H1 (cell line): ENCODE measurements at regions of chr1 and their contacts with region 1.

Region 1: GRCh38 chr1:175319418-175320230 is 127.0 kb upstream of the KIAA0040 start:
- DNase-seq: peak; percentile 21 to 73
- H3K4me3 ChIP-seq: no peak overlapping the region
- H3K27ac ChIP-seq: no peak overlapping the region
- H3K4me1 ChIP-seq: no peaks in the 10 kb centered on the region
- H3K27me3 ChIP-seq: no peaks in the 10 kb centered on the region
- CTCF ChIP-seq: peak; percentile 89 to 96 (median 95)
- EP300 ChIP-seq: no peak
- POLR2A ChIP-seq: no peak
- RAD21 ChIP-seq: peak; percentile 90 to 91

Region 2: GRCh38 chr1:174858301-174858700 is 461.3 kb before region 1 on chr1:
- CTCF ChIA-PET with region 1: no interaction called
- POLR2A ChIA-PET with region 1: no interaction called
- DNase-seq: no peak
- H3K4me3 ChIP-seq: no peak overlapping the region
- H3K27ac ChIP-seq: no peak overlapping the region
- H3K4me1 ChIP-seq: no peaks in the 10 kb centered on the region
- H3K27me3 ChIP-seq: no peaks in the 10 kb centered on the region
- CTCF ChIP-seq: no peak
- EP300 ChIP-seq: no peak
- POLR2A ChIP-seq: no peak
- RAD21 ChIP-seq: no peak

Region 3: DNA sequence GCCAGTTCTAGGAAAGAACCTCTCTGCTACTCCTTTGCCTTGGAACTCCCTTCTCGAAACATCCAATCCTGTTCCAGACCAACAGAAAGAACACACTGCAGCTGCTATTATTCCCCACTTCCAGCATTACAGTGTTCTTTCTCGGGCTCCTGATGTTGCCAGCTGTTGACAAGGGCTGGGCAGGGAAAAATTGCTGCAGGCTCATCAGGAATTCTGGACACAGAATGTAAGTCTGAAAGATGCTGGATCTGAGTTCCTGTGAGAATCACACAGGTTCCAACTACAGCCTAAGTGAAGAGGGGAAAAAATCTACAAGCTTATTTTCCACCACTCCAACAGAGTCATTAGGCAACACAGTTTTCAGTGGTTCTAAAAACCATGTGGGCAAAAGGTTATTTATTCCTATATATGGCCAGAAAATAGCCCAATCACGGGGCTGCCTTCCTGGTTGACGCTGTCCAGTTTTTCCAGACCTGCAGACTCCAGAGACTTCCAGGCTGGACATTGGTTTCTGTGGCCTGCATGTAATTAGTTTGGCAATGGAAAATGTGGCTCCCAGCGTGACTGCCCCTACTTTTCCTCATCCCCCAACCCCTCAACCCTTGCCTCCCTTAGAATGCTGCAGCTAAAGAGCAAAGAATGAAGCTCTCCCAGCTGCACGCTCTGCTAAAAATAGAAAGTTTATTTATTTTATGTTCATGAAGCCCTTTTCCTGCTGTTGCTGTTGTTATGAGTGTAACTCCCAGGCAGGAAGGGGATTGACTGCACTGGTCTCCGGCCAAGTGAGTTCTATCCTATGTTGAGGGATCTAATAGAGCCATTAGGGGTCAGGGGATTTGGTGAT is 118.7 kb before region 1 on chr1:
- CTCF ChIA-PET with region 1: interaction called, 10 read pairs
- POLR2A ChIA-PET with region 1: no interaction called
- DNase-seq: no peak
- H3K4me3 ChIP-seq: no peak overlapping the region
- H3K27ac ChIP-seq: no peak overlapping the region
- H3K4me1 ChIP-seq: no peaks in the 10 kb centered on the region; a peak in 1 of 7 replicates
- H3K27me3 ChIP-seq: no peaks in the 10 kb centered on the region
- CTCF ChIP-seq: no peak
- EP300 ChIP-seq: no peak
- POLR2A ChIP-seq: no peak
- RAD21 ChIP-seq: no peak

Region 4: DNA sequence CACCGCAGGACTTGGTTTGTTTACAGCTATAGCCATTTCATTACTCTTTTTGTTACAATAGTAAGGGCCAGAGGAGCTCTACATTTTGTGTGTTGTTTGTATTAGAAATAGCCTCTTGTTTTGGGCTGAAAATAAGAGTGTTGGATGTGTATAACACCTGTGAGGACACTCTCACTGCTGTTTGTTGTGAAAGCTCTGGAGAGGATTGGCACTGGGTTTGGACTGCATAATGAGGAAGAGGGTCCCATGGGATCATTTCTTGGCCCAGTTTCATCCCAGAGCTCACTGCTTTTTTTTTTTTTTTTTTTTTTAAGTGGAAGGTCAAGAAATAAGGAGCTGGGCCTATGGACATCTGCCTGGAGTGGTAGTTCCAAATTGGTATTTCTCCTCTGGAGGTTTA is 65.4 kb before region 1 on chr1:
- CTCF ChIA-PET with region 1: interaction called, 13 read pairs
- POLR2A ChIA-PET with region 1: no interaction called
- DNase-seq: no peak
- H3K4me3 ChIP-seq: no peak overlapping the region
- H3K27ac ChIP-seq: no peak overlapping the region
- H3K4me1 ChIP-seq: no peaks in the 10 kb centered on the region
- H3K27me3 ChIP-seq: no peaks in the 10 kb centered on the region
- CTCF ChIP-seq: no peak
- EP300 ChIP-seq: no peak
- POLR2A ChIP-seq: no peak
- RAD21 ChIP-seq: no peak

Region 5: GRCh38 chr1:175284790-175285189 is 34.8 kb before region 1 on chr1:
- CTCF ChIA-PET with region 1: interaction called, 25 read pairs
- POLR2A ChIA-PET with region 1: no interaction called
- DNase-seq: no peak
- H3K4me3 ChIP-seq: no peak overlapping the region
- H3K27ac ChIP-seq: no peak overlapping the region
- H3K4me1 ChIP-seq: no peaks in the 10 kb centered on the region
- H3K27me3 ChIP-seq: no peaks in the 10 kb centered on the region
- CTCF ChIP-seq: peak in 1 of 3 experiments; percentile 27; a peak in 2 of 4 replicates
- EP300 ChIP-seq: no peak
- POLR2A ChIP-seq: no peak
- RAD21 ChIP-seq: peak; percentile 23 to 25; a peak in 2 of 4 replicates

Region 6: GRCh38 chr1:175338387-175339135 is 18.9 kb after region 1 on chr1:
- CTCF ChIA-PET with region 1: interaction called, 30 read pairs
- POLR2A ChIA-PET with region 1: no interaction called
- DNase-seq: peak; percentile 29 to 92
- H3K4me3 ChIP-seq: no peak overlapping the region
- H3K27ac ChIP-seq: no peak overlapping the region
- H3K4me1 ChIP-seq: no peaks in the 10 kb centered on the region; a peak in 1 of 7 replicates
- H3K27me3 ChIP-seq: no peaks in the 10 kb centered on the region
- CTCF ChIP-seq: peak; percentile 68 to 91 (median 89)
- EP300 ChIP-seq: no peak
- POLR2A ChIP-seq: no peak
- RAD21 ChIP-seq: peak; percentile 55 to 58; a peak in 3 of 4 replicates

Region 7: DNA sequence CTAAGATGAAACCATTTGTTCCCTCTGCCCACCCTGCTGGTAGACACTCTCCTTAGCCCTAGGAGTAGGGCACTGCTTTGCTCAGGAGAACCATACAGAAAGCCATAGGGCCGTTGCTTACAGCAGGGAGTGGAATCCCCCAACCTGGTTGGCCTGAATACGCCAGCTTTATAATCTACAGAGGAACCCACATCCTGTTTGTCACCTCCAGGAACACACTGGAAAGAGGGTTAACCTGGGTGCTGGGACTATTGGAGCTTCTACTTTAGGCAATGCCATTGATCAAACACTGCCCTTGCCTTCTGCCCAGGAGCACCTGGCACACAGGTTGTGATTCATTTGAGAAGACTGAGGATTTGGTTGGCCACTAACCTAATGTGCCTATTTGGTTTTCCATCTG is 298.9 kb after region 1 on chr1:
- CTCF ChIA-PET with region 1: no interaction called
- POLR2A ChIA-PET with region 1: no interaction called
- DNase-seq: no peak
- H3K4me3 ChIP-seq: no peak overlapping the region
- H3K27ac ChIP-seq: no peak overlapping the region
- H3K4me1 ChIP-seq: no peaks in the 10 kb centered on the region
- H3K27me3 ChIP-seq: peaks cover 0 to 1% (median 0%) of the 10 kb centered on the region in 4 experiments; a peak in 2 of 7 replicates
- CTCF ChIP-seq: no peak
- EP300 ChIP-seq: no peak
- POLR2A ChIP-seq: no peak
- RAD21 ChIP-seq: no peak